Activated CD8-positive, alpha-beta T cell treated with anti-CD3 and anti-CD28 coated beads, Interleukin-2, amount 10 ng/mL, durations not matched to agents 7 days and 5 days (primary cell): ENCODE measurements at regions of chr12 and their contacts with region 1.

Region 1: GRCh38 chr12:47207340-47207717 is 127.6 kb upstream of the AMIGO2 start:
- DNase-seq: peak; percentile 77
- ATAC-seq: peak; percentile 70
- H3K4me3 Mint-ChIP-seq: peak overlapping the region; percentile 83
- H3K27ac Mint-ChIP-seq: peak overlapping the region; percentile 91
- H3K4me1 Mint-ChIP-seq: peaks cover 75% of the 10 kb centered on the region
- H3K27me3 Mint-ChIP-seq: no peaks in the 10 kb centered on the region

Region 2: DNA sequence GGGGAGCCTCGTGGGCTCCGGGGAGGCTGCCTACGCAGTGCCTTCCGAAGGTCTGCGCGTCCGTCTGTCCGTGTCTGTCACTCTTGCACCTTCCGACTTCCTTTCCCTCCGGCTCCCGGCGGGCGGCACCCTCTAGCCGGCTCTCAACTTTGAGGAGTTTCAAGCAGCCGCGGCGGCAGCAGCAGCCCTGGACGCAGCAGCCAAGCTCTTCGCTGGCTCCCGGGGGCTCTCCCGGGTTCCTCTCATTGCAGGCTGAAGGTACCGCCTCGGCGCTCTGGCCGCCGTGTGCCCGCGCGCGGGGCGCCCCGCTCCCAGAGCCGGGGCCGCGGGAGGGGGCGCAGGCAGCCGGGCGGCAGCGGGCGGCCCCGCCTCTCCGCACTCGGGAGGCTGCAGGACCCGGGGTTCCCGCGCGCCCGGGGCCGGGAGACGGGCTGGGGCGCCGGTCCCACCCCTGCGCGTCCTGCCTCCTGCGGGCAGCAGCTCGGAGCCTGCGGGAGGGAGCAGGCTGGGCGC is 127.8 kb before region 1 on chr12 and contains the starts of genes AMIGO2 and PCED1B:
- CTCF ChIA-PET with region 1: interaction called, 25 read pairs
- POLR2A ChIA-PET with region 1: interaction called, 30 read pairs
- DNase-seq: peak; percentile 77
- ATAC-seq: peak; percentile 67
- H3K4me3 Mint-ChIP-seq: peak within 1 kb of the TSS; percentile 94
- H3K27ac Mint-ChIP-seq: peak within 1 kb of the TSS; percentile 90
- H3K4me1 Mint-ChIP-seq: peaks cover 62% of the 10 kb centered on the region
- H3K27me3 Mint-ChIP-seq: no peaks in the 10 kb centered on the region
- total RNA-seq, gene AMIGO2: 10.2 TPM
- total RNA-seq, gene PCED1B: 72.1 to 74.2 TPM

Region 3: DNA sequence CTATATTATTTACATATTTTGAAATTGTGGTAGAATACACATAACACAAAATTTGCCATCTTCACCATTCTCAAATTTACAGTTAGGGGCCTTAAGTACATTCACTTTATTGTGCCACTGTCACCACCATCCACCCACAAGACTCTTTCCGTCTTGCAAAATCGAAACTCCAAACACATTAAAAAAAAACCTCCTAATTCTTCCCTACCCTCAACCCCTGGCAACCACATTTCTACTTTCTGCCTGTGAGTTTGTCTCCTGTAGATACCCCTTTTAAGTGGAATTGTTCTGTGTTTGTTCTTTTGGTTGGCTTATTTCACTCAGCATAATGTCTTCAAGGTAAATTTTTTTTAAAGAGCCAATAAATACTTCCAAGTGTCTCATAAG is 95.9 kb before region 1 on chr12:
- CTCF ChIA-PET with region 1: no interaction called
- POLR2A ChIA-PET with region 1: no interaction called
- DNase-seq: peak; percentile 57
- ATAC-seq: peak; percentile 85
- H3K4me3 Mint-ChIP-seq: peak overlapping the region; percentile 40
- H3K27ac Mint-ChIP-seq: peak overlapping the region; percentile 83
- H3K4me1 Mint-ChIP-seq: peaks cover 38% of the 10 kb centered on the region
- H3K27me3 Mint-ChIP-seq: no peaks in the 10 kb centered on the region

Region 4: DNA sequence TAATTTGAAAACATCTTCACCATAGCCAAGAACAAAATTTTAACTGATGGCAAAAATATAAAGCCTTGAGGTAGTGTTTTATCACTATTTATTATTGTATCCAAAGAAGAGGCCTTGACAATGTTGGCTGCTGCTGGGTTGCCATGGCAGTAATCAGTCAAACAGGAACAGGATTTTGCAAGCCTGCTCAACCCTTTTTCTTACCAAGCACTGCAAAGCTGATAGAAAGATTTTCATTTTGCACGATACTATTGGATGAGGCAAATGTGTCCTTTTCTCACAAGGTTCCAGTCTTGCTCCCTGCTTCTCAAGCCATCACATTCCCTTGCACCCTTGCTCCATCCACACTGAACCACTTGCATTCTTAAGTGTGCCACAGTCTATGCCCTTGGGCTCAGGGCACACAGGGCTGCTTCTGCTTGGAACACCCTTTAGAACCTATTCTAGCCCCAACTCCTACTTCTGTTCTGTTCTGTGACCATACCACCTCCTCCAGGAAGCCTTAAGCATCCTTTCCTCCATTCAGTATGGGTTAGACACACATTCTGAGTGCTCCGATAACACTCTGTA is 51.1 kb before region 1 on chr12:
- CTCF ChIA-PET with region 1: no interaction called
- POLR2A ChIA-PET with region 1: no interaction called
- DNase-seq: no peak
- ATAC-seq: no peak
- H3K4me3 Mint-ChIP-seq: no peak overlapping the region
- H3K27ac Mint-ChIP-seq: no peak overlapping the region
- H3K4me1 Mint-ChIP-seq: peaks cover 12% of the 10 kb centered on the region
- H3K27me3 Mint-ChIP-seq: no peaks in the 10 kb centered on the region